IMR-90 (cell line): ENCODE measurements at regions of chr1 and their contacts with region 1.

Region 1: GRCh38 chr1:165367375-165367993 is 11.0 kb upstream of the LMX1A start:
- DNase-seq: peak; percentile 56
- ATAC-seq: peak; percentile 59; the same call in 1 of the 2 replicates
- H3K4me3 ChIP-seq: no peak overlapping the region
- H3K27ac ChIP-seq: no peak overlapping the region
- H3K4me1 ChIP-seq: no peaks in the 10 kb centered on the region
- H3K27me3 ChIP-seq: no peaks in the 10 kb centered on the region; the same call in 1 of the 2 replicates
- CTCF ChIP-seq: peak; percentile 64
- POLR2A ChIP-seq: no peak
- RAD21 ChIP-seq: peak; percentile 31; the same call in 1 of the 2 replicates

Region 2: GRCh38 chr1:165114022-165114888 is 253.2 kb before region 1 on chr1:
- CTCF ChIA-PET with region 1: no interaction called
- POLR2A ChIA-PET with region 1: no interaction called
- dilution Hi-C with region 1: no loop called
- in situ Hi-C with region 1: no loop called
- intact Hi-C with region 1: loop called (anchors 5 kb)
- DNase-seq: peak; percentile 30
- ATAC-seq: peak; percentile 72
- H3K4me3 ChIP-seq: no peak overlapping the region
- H3K27ac ChIP-seq: no peak overlapping the region
- H3K4me1 ChIP-seq: no peaks in the 10 kb centered on the region
- H3K27me3 ChIP-seq: no peaks in the 10 kb centered on the region; the same call in 1 of the 2 replicates
- CTCF ChIP-seq: peak; percentile 68
- POLR2A ChIP-seq: no peak
- RAD21 ChIP-seq: peak; percentile 61

Region 3: DNA sequence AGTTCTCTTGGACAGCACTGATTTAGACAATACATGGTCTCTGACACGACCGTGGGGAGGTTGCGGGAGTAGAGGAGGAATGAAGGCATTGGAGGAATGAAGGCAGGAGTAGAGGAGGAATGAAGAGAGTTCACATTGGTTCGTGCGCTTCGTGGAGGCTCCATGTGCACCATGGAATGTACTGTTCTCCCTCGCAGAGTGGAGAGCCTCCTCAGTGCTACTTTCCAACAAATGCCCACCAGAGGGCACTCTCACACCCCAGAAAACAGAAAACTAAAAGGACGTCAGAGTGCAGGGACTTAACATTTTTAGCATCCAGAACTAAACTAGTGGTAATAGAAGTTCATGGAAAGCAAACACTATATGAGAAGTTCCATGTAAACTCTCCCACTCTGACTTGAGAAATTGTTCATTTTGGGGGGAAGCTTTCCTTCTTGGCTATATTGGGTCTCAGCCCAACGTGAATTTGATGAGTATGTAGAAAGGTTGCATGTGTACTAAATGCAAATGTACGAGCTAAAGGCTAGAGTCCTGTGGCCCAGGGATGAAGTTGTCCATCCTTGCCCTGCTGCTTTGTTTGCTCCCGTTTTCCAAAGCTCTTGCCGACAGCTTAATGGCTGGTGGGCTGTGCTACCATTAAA is 222.6 kb before region 1 on chr1:
- CTCF ChIA-PET with region 1: no interaction called
- POLR2A ChIA-PET with region 1: no interaction called
- dilution Hi-C with region 1: no loop called
- in situ Hi-C with region 1: no loop called
- intact Hi-C with region 1: loop called (anchors 10 kb)
- DNase-seq: peak; percentile 44
- ATAC-seq: peak; percentile 95
- H3K4me3 ChIP-seq: no peak overlapping the region
- H3K27ac ChIP-seq: no peak overlapping the region
- H3K4me1 ChIP-seq: no peaks in the 10 kb centered on the region
- H3K27me3 ChIP-seq: no peaks in the 10 kb centered on the region
- CTCF ChIP-seq: peak; percentile 70
- POLR2A ChIP-seq: no peak
- RAD21 ChIP-seq: peak; percentile 33

Region 4: DNA sequence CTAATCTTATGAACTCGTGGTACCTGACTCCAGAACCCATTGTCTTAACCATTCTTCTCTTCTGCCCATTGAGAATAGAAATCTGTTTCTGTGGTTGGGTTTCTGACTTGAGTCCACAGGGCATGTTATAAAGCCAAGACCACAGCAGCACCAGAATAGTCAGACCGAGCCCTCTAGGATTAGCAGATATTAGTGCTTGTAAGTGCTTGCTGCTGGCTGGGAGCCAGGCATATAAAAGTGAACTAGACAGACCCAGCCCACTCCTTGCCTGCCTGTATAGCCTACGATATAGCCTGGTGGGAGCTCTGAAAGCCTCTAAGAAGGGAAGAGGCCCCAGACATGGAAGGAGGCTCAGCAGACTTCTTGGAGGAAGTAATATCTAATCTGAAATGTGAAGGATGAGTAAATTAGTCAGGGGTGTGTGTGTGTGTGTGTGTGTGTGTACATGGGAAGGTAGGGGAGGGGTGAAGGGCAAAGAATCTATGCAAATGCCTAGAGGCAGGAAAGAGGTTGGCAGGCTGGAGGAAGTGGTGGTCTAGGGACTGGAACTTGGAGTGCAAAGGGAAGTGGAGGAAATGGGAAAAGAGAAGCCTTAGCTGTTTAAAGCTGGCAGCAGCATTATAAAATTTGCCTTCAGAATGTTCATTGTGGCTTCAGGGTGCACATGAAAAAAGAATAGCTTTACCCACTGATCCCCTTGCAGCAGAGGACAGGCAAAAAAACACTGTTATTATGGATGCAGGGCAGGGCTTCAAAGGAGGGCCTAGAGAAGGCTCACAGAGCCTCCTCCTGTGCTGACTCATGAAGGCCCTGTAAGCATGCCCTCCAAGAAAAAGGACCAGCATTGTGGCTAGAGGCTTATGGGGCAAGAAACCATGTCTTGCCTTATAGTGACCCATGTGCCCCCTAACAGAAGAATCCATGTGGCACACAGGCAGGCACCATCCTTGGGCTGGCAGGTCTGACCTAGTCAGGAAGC is 180.2 kb before region 1 on chr1:
- CTCF ChIA-PET with region 1: no interaction called
- POLR2A ChIA-PET with region 1: no interaction called
- dilution Hi-C with region 1: no loop called
- in situ Hi-C with region 1: no loop called
- intact Hi-C with region 1: no loop called
- DNase-seq: no peak
- ATAC-seq: no peak
- H3K4me3 ChIP-seq: no peak overlapping the region
- H3K27ac ChIP-seq: no peak overlapping the region
- H3K4me1 ChIP-seq: no peaks in the 10 kb centered on the region
- H3K27me3 ChIP-seq: no peaks in the 10 kb centered on the region
- CTCF ChIP-seq: no peak
- POLR2A ChIP-seq: no peak
- RAD21 ChIP-seq: no peak

Region 5: GRCh38 chr1:165344198-165344597 is 23.3 kb before region 1 on chr1:
- CTCF ChIA-PET with region 1: no interaction called
- POLR2A ChIA-PET with region 1: no interaction called
- dilution Hi-C with region 1: no loop called
- in situ Hi-C with region 1: no loop called
- intact Hi-C with region 1: no loop called
- DNase-seq: no peak
- ATAC-seq: no peak
- H3K4me3 ChIP-seq: no peak overlapping the region
- H3K27ac ChIP-seq: no peak overlapping the region
- H3K4me1 ChIP-seq: no peaks in the 10 kb centered on the region
- H3K27me3 ChIP-seq: peaks cover 1% of the 10 kb centered on the region; the same call in 1 of the 2 replicates
- CTCF ChIP-seq: no peak
- POLR2A ChIP-seq: no peak
- RAD21 ChIP-seq: no peak

Region 6: DNA sequence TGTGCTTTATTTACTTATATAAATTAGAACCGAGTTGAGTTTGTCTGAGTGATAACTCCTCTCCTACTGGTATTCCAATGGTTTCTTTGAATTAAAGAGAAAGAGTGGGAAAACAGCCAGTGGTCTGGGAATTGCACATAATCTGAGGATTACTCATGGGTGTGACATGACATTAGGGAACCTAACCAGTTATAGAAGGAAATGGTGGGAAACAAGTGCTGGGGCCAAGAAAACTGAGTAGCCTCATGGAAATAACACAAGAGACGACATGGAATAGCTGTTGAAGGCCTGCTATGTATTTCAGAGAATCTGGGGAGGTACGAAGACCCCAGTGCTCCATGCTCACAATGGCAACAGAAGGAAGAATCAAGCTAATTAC is 134.5 kb after region 1 on chr1:
- CTCF ChIA-PET with region 1: no interaction called
- POLR2A ChIA-PET with region 1: no interaction called
- dilution Hi-C with region 1: no loop called
- in situ Hi-C with region 1: no loop called
- intact Hi-C with region 1: no loop called
- DNase-seq: no peak
- ATAC-seq: no peak
- H3K4me3 ChIP-seq: no peak overlapping the region
- H3K27ac ChIP-seq: no peak overlapping the region
- H3K4me1 ChIP-seq: no peaks in the 10 kb centered on the region
- H3K27me3 ChIP-seq: no peaks in the 10 kb centered on the region
- CTCF ChIP-seq: no peak
- POLR2A ChIP-seq: no peak
- RAD21 ChIP-seq: no peak